IMR-90 (cell line): ENCODE measurements at regions of chr9 and their contacts with region 1.

Region 1: GRCh38 chr9:124420991-124421543 is 5.8 kb upstream of the PSMB7 start:
- DNase-seq: peak; percentile 13
- ATAC-seq: no peak
- H3K4me3 ChIP-seq: no peak overlapping the region
- H3K27ac ChIP-seq: no peak overlapping the region
- H3K4me1 ChIP-seq: no peaks in the 10 kb centered on the region
- H3K27me3 ChIP-seq: peaks cover 10% of the 10 kb centered on the region
- CTCF ChIP-seq: no peak
- POLR2A ChIP-seq: no peak
- RAD21 ChIP-seq: no peak

Region 2: GRCh38 chr9:124439686-124440243 is 18.7 kb after region 1 on chr9:
- CTCF ChIA-PET with region 1: no interaction called
- POLR2A ChIA-PET with region 1: no interaction called
- dilution Hi-C with region 1: no loop called
- in situ Hi-C with region 1: no loop called
- intact Hi-C with region 1: no loop called
- DNase-seq: no peak
- ATAC-seq: no peak
- H3K4me3 ChIP-seq: no peak overlapping the region
- H3K27ac ChIP-seq: no peak overlapping the region
- H3K4me1 ChIP-seq: no peaks in the 10 kb centered on the region
- H3K27me3 ChIP-seq: peaks cover 35% of the 10 kb centered on the region
- CTCF ChIP-seq: no peak
- POLR2A ChIP-seq: no peak
- RAD21 ChIP-seq: no peak

Region 3: GRCh38 chr9:124532897-124533296 is 111.8 kb after region 1 on chr9:
- CTCF ChIA-PET with region 1: interaction called, 25 read pairs
- POLR2A ChIA-PET with region 1: no interaction called
- dilution Hi-C with region 1: no loop called
- in situ Hi-C with region 1: loop called (anchors 5 kb)
- intact Hi-C with region 1: loop called (anchors 1 kb)
- DNase-seq: no peak
- ATAC-seq: no peak
- H3K4me3 ChIP-seq: no peak overlapping the region
- H3K27ac ChIP-seq: no peak overlapping the region
- H3K4me1 ChIP-seq: peaks cover 2% of the 10 kb centered on the region
- H3K27me3 ChIP-seq: peaks cover 2% of the 10 kb centered on the region; the same call in 1 of the 2 replicates
- CTCF ChIP-seq: no peak
- POLR2A ChIP-seq: no peak
- RAD21 ChIP-seq: no peak

Region 4: GRCh38 chr9:124537926-124538325 is 116.9 kb after region 1 on chr9:
- CTCF ChIA-PET with region 1: interaction called, 25 read pairs
- POLR2A ChIA-PET with region 1: no interaction called
- dilution Hi-C with region 1: no loop called
- in situ Hi-C with region 1: loop called (anchors 5 kb)
- intact Hi-C with region 1: loop called (anchors 1 kb)
- DNase-seq: no peak
- ATAC-seq: no peak
- H3K4me3 ChIP-seq: no peak overlapping the region
- H3K27ac ChIP-seq: no peak overlapping the region
- H3K4me1 ChIP-seq: no peaks in the 10 kb centered on the region
- H3K27me3 ChIP-seq: peaks cover 10% of the 10 kb centered on the region
- CTCF ChIP-seq: no peak
- POLR2A ChIP-seq: no peak
- RAD21 ChIP-seq: no peak